CD4-positive, alpha-beta memory T cell (primary cell): ENCODE measurements at regions of chr2 and their contacts with region 1.

Region 1: DNA sequence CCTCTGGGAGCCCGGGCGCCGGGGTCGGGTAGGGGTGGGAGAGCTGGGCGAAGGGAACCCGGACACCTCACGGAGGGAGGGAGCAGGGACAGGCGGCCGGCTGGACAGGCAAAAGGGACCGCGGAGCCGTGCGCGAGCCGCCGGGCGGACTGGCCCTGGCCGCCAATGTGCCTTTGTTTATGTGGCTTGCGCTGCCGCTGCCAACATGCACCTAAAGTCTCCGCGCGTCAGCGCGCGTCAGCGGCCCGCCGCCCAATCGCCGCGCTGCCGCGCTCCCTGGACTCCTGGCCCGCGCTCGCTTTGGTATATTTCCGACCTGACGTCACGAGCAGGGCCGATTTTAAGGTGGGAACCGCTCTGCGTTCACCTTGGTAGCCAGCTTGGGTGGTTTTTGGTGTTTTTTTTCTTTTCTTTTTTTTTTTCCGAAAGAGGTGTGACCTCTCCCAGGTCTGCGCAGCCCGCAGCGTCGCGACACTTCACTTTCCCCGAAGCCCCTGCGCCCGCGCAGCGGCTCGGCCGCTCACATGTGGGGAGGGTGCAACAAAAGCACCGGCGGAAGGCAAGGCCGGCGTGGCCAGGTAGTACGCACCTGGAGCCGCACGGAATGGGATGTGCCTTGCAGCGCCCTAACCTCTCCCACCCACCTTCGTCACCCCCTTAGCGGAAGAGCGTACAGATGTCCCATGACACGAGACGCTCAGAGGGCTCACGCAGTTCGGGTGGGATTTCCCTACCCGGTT is at the start of gene NR4A2:
- DNase-seq: peak; percentile 93 to 97 (median 94)
- H3K4me3 ChIP-seq: peak within 1 kb of the TSS; percentile 62 to 91
- H3K4me3 Mint-ChIP-seq: peak within 1 kb of the TSS; percentile 93 to 97 (median 97)
- H3K27ac ChIP-seq: peak within 1 kb of the TSS; percentile 99
- H3K27ac Mint-ChIP-seq: peak within 1 kb of the TSS; percentile 99 to 100 (median 100)
- H3K4me1 ChIP-seq: peaks cover 31% of the 10 kb centered on the region
- H3K4me1 Mint-ChIP-seq: peaks cover 15 to 63% (median 28%) of the 10 kb centered on the region in 4 donors
- H3K27me3 ChIP-seq: no peaks in the 10 kb centered on the region
- H3K27me3 Mint-ChIP-seq: peaks cover 11 to 25% of the 10 kb centered on the region in 2 donors
- total RNA-seq, gene NR4A2: 2.1 TPM

Region 2: DNA sequence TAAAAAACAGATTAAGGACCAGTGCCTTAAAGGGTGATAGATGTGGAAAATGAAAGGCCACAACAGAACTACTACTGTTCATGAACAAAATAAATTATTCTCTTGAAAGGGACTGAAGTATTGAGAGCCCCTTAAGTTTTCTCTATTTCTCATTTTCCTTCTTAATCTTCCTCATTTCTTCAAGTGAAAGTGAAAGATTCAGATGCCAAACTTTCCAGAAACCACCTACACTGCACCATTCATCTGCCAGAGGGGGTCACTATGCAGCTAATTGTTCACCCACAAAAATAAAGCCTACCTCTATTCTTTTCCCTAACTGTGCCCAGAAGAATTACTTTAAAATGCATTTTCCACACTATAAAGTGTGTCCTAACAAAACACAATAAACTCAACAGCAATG is 140.2 kb before region 1 on chr2:
- CTCF ChIA-PET with region 1: no interaction called
- POLR2A ChIA-PET with region 1: no interaction called
- intact Hi-C with region 1: loop called (anchors 5 kb)
- DNase-seq: peak in 1 of 5 donors; percentile 5
- H3K4me3 ChIP-seq: no peak overlapping the region
- H3K4me3 Mint-ChIP-seq: no peak overlapping the region
- H3K27ac ChIP-seq: no peak overlapping the region
- H3K27ac Mint-ChIP-seq: peak overlapping the region in 1 of 7 donors; percentile 20
- H3K4me1 ChIP-seq: no peaks in the 10 kb centered on the region
- H3K4me1 Mint-ChIP-seq: no peaks in the 10 kb centered on the region
- H3K27me3 ChIP-seq: no peaks in the 10 kb centered on the region
- H3K27me3 Mint-ChIP-seq: peaks cover 0 to under 1% of the 10 kb centered on the region in 2 donors

Region 3: DNA sequence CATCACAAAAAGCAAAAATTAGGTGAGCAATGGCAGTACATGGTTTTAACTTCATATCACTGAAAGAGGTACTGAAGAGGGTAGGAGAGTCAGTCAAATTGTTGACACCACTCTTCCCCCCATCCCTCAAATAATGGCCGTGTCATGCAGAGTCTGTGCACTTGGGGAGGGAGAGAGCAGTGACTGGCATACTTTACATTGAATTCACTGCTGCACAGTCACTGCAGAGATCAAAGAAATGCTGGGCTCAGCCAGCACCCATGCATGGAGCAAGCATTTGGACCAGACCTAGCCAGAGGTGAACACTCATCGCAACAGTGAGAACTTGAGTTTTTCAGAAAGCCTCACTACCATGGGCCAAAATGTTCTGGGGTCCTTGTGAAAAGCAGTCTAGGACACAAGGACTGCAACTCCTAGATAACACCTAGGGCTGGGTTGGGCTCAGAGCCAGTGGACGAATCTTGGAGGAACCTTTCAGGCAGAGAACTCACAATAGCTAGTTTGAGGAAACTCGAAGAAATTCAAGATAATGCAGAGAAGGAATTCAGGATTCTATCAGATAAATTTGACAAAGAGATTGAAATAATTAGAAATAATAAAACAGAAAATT is 113.1 kb before region 1 on chr2:
- CTCF ChIA-PET with region 1: no interaction called
- POLR2A ChIA-PET with region 1: no interaction called
- intact Hi-C with region 1: no loop called
- DNase-seq: no peak
- H3K4me3 ChIP-seq: no peak overlapping the region
- H3K4me3 Mint-ChIP-seq: no peak overlapping the region
- H3K27ac ChIP-seq: no peak overlapping the region
- H3K27ac Mint-ChIP-seq: no peak overlapping the region
- H3K4me1 ChIP-seq: no peaks in the 10 kb centered on the region
- H3K4me1 Mint-ChIP-seq: no peaks in the 10 kb centered on the region
- H3K27me3 ChIP-seq: no peaks in the 10 kb centered on the region
- H3K27me3 Mint-ChIP-seq: peaks cover 7 to 11% of the 10 kb centered on the region in 2 donors

Region 4: GRCh38 chr2:156346731-156347130 is 14.0 kb after region 1 on chr2:
- CTCF ChIA-PET with region 1: interaction called, 28 read pairs
- POLR2A ChIA-PET with region 1: interaction called, 136 read pairs
- intact Hi-C with region 1: loop called (anchors 1 kb)
- DNase-seq: no peak
- H3K4me3 ChIP-seq: no peak overlapping the region
- H3K4me3 Mint-ChIP-seq: no peak overlapping the region
- H3K27ac ChIP-seq: no peak overlapping the region
- H3K27ac Mint-ChIP-seq: peak overlapping the region in 3 of 7 donors; percentile 11 to 36 (median 28)
- H3K4me1 ChIP-seq: peaks cover 9% of the 10 kb centered on the region
- H3K4me1 Mint-ChIP-seq: peaks cover 4 to 20% (median 11%) of the 10 kb centered on the region in 4 donors
- H3K27me3 ChIP-seq: no peaks in the 10 kb centered on the region
- H3K27me3 Mint-ChIP-seq: peaks cover 0 to under 1% of the 10 kb centered on the region in 2 donors

Region 5: DNA sequence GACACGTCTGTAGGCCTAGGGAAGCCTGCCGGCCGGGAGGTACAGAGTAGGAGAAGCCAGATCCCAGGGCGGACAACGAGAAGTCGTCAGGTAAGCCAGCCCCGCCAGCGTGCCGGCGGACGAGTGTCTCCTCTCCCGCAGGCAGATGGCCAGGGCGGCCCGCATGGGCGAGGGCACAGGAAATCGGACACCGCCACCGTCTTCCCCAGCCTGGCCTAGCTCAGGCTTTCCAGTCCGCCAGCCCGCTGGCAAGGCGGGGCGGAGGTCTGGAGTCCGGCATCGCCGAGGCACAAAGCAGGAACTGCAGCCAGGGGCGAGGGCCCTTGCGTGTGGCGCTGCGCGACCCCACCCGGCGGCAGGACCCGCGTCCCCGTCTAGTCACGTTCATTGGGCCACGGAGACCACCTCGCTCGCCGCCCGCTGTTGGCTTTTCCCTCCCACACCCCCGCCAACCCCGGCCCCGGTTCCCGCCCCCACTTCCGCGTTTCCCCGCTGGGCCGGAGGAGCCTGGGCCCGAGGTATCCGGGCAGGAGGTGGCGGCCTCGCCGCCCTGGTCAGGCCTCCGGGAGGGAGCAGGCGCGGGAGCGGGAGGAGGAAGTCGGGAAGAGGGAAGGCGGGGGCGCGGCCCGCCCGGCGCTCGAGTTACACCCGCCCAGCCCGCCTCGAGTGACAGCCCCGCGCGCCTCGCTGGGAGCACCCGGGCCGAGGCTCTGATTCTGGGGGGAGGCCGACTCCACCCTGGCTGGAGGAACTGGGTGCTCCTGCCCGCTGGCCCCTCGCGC is 103.2 kb after region 1 on chr2 and contains the start of gene GPD2:
- CTCF ChIA-PET with region 1: interaction called, 18 read pairs
- POLR2A ChIA-PET with region 1: interaction called, 26 read pairs
- intact Hi-C with region 1: loop called (anchors 1 kb)
- DNase-seq: peak; percentile 58 to 68 (median 62)
- H3K4me3 ChIP-seq: peak within 1 kb of the TSS; percentile 20 to 66
- H3K4me3 Mint-ChIP-seq: peak within 1 kb of the TSS; percentile 93 to 99 (median 98)
- H3K27ac ChIP-seq: peak within 1 kb of the TSS; percentile 65
- H3K27ac Mint-ChIP-seq: peak within 1 kb of the TSS; percentile 93 to 98 (median 97)
- H3K4me1 ChIP-seq: peaks cover 22% of the 10 kb centered on the region
- H3K4me1 Mint-ChIP-seq: peaks cover 23 to 46% (median 31%) of the 10 kb centered on the region in 4 donors
- H3K27me3 ChIP-seq: no peaks in the 10 kb centered on the region
- H3K27me3 Mint-ChIP-seq: no peaks in the 10 kb centered on the region
- total RNA-seq, gene GPD2: 12.2 to 13.1 TPM

Region 6: DNA sequence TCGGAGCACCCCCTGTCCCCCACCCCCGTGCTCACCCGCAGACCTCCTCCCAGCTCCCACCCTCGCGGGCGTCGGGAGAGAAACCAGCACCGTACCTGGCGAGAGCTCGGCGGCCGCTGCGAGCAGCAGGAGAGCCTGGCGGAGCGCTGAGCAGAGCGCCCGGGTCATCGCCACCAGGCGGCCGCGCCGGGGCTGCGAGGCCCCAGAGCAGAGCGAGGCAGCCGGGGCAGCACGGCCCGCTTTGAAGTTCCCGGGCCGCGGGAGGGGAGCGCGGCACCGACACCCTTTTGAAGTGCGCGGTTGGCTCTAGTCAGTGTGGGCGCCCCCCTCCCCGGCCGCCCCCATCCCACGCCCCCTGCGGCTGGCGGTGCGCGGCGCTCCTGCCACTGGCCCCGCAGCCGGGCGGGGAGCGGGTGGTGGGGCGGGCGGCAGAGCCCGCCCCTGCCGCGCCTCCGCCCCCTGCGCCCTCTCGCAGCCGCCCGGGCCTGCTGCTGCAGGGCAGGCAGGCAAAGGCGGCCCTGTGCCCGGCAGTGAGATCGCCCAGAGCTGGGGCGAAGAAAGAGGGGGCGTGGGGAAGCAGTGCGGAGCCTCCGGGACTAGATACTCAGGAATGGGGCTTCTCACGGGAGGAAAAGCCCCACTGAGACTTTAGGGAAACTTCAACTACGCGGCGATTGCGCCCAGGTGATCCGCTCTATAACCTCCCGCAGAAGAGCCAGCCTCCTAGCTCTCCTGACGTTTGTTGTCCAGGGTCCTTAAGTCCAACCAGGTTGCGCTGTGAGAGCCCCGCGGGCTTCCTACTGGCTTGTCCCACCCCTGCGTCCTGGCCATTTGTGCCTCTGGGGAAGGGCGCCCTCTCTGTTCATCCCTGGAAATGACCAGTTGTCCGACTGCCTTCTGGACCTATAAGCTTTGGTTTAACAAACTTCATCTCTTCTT is 1296.0 kb after region 1 on chr2 and contains the start of gene ACVR1C:
- CTCF ChIA-PET with region 1: no interaction called
- POLR2A ChIA-PET with region 1: no interaction called
- intact Hi-C with region 1: loop called (anchors 5 kb)
- DNase-seq: peak; percentile 70 to 81 (median 75)
- H3K4me3 ChIP-seq: peak within 1 kb of the TSS; percentile 45 to 68
- H3K4me3 Mint-ChIP-seq: peak within 1 kb of the TSS; percentile 92 to 98 (median 95)
- H3K27ac ChIP-seq: peak within 1 kb of the TSS; percentile 58
- H3K27ac Mint-ChIP-seq: peak within 1 kb of the TSS; percentile 85 to 94 (median 89)
- H3K4me1 ChIP-seq: peaks cover 39% of the 10 kb centered on the region
- H3K4me1 Mint-ChIP-seq: peaks cover 22 to 48% (median 33%) of the 10 kb centered on the region in 4 donors
- H3K27me3 ChIP-seq: no peaks in the 10 kb centered on the region
- H3K27me3 Mint-ChIP-seq: peaks cover 0 to 2% of the 10 kb centered on the region in 2 donors
- total RNA-seq, gene ACVR1C: 6.3 to 6.9 TPM

Region 7: GRCh38 chr2:157898591-157898996 is 1565.9 kb after region 1 on chr2:
- CTCF ChIA-PET with region 1: no interaction called
- POLR2A ChIA-PET with region 1: no interaction called
- intact Hi-C with region 1: loop called (anchors 5 kb)
- DNase-seq: peak in 4 of 5 donors; percentile 15 to 83 (median 32)
- H3K4me3 ChIP-seq: peak overlapping the region in 1 of 2 donors; percentile 11
- H3K4me3 Mint-ChIP-seq: peak overlapping the region; percentile 40 to 95 (median 90)
- H3K27ac ChIP-seq: peak overlapping the region; percentile 51
- H3K27ac Mint-ChIP-seq: peak overlapping the region; percentile 96 to 100 (median 99)
- H3K4me1 ChIP-seq: peaks cover 77% of the 10 kb centered on the region
- H3K4me1 Mint-ChIP-seq: peaks cover 62 to 79% (median 72%) of the 10 kb centered on the region in 4 donors
- H3K27me3 ChIP-seq: no peaks in the 10 kb centered on the region
- H3K27me3 Mint-ChIP-seq: no peaks in the 10 kb centered on the region